Breast epithelium (tissue), 4 donors: ENCODE measurements at regions of chr10 and their contacts with region 1.

Region 1: GRCh38 chr10:82236084-82236731 is 361.2 kb downstream of the NRG3 start:
- DNase-seq: no peak
- H3K4me3 ChIP-seq: no peak overlapping the region
- H3K27ac ChIP-seq: no peak overlapping the region
- H3K4me1 ChIP-seq: no peaks in the 10 kb centered on the region
- H3K27me3 ChIP-seq: no peaks in the 10 kb centered on the region
- CTCF ChIP-seq: no peak
- POLR2A ChIP-seq: no peak

Region 2: GRCh38 chr10:80662577-80663261 is 1573.5 kb before region 1 on chr10:
- intact Hi-C with region 1: loop called (anchors 10 kb)
- DNase-seq: peak; percentile 56 to 79
- H3K4me3 ChIP-seq: peak overlapping the region; percentile 8 to 59 (median 29)
- H3K27ac ChIP-seq: peak overlapping the region in 1 of 2 donors; percentile 80
- H3K4me1 ChIP-seq: peaks cover 0 to 3% of the 10 kb centered on the region in 2 donors
- H3K27me3 ChIP-seq: peaks cover 0 to 4% of the 10 kb centered on the region in 2 donors
- CTCF ChIP-seq: peak; percentile 72 to 88 (median 86)
- POLR2A ChIP-seq: no peak

Region 3: GRCh38 chr10:83199374-83199773 is 963.2 kb after region 1 on chr10:
- intact Hi-C with region 1: no loop called
- DNase-seq: no peak
- H3K4me3 ChIP-seq: no peak overlapping the region
- H3K27ac ChIP-seq: no peak overlapping the region
- H3K4me1 ChIP-seq: no peaks in the 10 kb centered on the region
- H3K27me3 ChIP-seq: no peaks in the 10 kb centered on the region
- CTCF ChIP-seq: no peak
- POLR2A ChIP-seq: no peak

Region 4: GRCh38 chr10:83248106-83248631 is 1012.0 kb after region 1 on chr10:
- intact Hi-C with region 1: loop called (anchors 10 kb)
- DNase-seq: no peak
- H3K4me3 ChIP-seq: no peak overlapping the region
- H3K27ac ChIP-seq: no peak overlapping the region
- H3K4me1 ChIP-seq: no peaks in the 10 kb centered on the region
- H3K27me3 ChIP-seq: no peaks in the 10 kb centered on the region
- CTCF ChIP-seq: no peak
- POLR2A ChIP-seq: no peak